ENCODE measurements at regions of chr5 and their contacts with region 1.

Region 1: GRCh38 chr5:111223889-111224563 is at the start of gene CAMK4:
- DNase-seq: peak; percentile 86
- ATAC-seq: peak; percentile 82
- H3K4me3 Mint-ChIP-seq: peak within 1 kb of the TSS; percentile 88
- H3K27ac Mint-ChIP-seq: peak within 1 kb of the TSS; percentile 93
- H3K4me1 Mint-ChIP-seq: peaks cover 30% of the 10 kb centered on the region
- H3K27me3 Mint-ChIP-seq: no peaks in the 10 kb centered on the region
- total RNA-seq, gene CAMK4: 132 to 154 TPM

Region 2: GRCh38 chr5:111004286-111004685 is 219.7 kb before region 1 on chr5:
- POLR2A ChIA-PET with region 1: no interaction called
- DNase-seq: no peak
- ATAC-seq: no peak
- H3K4me3 Mint-ChIP-seq: no peak overlapping the region
- H3K27ac Mint-ChIP-seq: no peak overlapping the region
- H3K4me1 Mint-ChIP-seq: no peaks in the 10 kb centered on the region
- H3K27me3 Mint-ChIP-seq: peaks cover 4% of the 10 kb centered on the region

Region 3: GRCh38 chr5:111234125-111234524 is 10.1 kb after region 1 on chr5:
- POLR2A ChIA-PET with region 1: interaction called, 77 read pairs
- DNase-seq: no peak
- ATAC-seq: peak; percentile 10
- H3K4me3 Mint-ChIP-seq: peak overlapping the region; percentile 83
- H3K27ac Mint-ChIP-seq: peak overlapping the region; percentile 97
- H3K4me1 Mint-ChIP-seq: peaks cover 85% of the 10 kb centered on the region
- H3K27me3 Mint-ChIP-seq: no peaks in the 10 kb centered on the region

Region 4: DNA sequence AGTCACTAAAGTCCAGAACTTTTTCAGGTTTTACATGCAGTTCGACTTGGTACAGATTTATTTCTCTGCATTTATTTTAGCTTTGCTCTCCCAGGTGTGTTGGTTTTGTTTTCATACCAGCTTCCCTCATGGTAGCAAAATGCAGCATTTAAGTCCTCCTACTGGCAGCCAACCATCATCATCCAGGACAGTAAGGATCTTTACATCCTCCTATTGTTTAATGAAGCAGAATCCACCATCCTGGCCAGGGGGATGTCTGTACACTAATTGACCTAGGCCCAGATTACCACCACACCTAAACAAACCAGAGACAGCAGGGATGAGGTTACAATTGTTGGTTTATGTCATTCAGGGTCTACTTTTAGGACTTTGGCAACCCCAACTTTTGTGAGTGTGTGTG is 22.4 kb after region 1 on chr5:
- POLR2A ChIA-PET with region 1: interaction called, 10 read pairs
- DNase-seq: no peak
- ATAC-seq: peak; percentile 25
- H3K4me3 Mint-ChIP-seq: peak overlapping the region; percentile 51
- H3K27ac Mint-ChIP-seq: peak overlapping the region; percentile 57
- H3K4me1 Mint-ChIP-seq: peaks cover 66% of the 10 kb centered on the region
- H3K27me3 Mint-ChIP-seq: no peaks in the 10 kb centered on the region

Region 5: GRCh38 chr5:111254613-111255012 is 30.6 kb after region 1 on chr5:
- POLR2A ChIA-PET with region 1: interaction called, 18 read pairs
- DNase-seq: no peak
- ATAC-seq: peak; percentile 75
- H3K4me3 Mint-ChIP-seq: peak overlapping the region; percentile 70
- H3K27ac Mint-ChIP-seq: peak overlapping the region; percentile 75
- H3K4me1 Mint-ChIP-seq: peaks cover 50% of the 10 kb centered on the region
- H3K27me3 Mint-ChIP-seq: no peaks in the 10 kb centered on the region

Measured in activated naive CD8-positive, alpha-beta T cell treated with anti-CD3 and anti-CD28 coated beads, Interleukin-2, amount 10 ng/mL, durations not matched to agents 7 days and 5 days (primary cell).